Gastrocnemius medialis (tissue), 4 donors: ENCODE measurements at regions of chr7 and their contacts with region 1.

Region 1: DNA sequence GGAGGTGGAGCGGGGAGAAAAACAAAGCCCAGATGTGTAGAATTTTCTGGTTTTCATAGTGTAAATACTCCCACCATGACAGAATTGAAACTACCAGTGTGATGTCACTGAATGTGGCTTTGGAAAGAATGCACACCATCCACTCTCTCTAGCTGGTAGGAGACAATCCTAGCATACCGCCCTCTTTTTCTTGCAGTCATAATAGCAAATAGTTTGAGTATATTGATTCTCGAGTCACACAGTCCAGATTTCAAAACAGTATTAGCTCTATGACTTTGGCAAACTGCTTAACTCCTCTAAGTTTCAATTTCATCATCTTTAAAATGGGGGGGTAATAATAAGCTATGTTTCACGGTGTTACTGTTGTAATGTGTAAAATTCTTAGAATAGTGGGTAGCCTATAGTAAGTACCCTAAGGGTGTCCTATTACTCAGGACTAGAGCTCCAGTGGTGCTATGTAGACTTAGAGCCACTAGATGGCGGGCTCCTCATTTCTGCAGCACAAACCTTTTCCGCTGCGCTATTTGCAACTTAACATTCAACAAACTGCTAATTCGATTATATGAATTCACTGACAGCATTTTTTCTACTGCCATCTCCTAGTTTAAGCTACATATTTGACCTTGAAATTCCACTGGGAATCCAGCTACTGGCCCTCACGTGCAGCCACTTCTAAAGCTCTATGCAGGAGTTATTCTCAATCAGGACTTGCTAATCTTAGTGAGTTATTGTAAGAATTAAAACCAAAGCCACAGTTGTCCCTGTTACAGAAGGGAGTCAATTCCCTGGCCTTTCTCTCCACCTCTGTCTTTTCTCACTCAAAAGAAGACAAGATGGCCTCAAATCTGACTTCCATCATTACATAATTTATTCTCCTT is 18.7 kb downstream of the TAS2R40 start:
- DNase-seq: peak; percentile 43 to 56
- ATAC-seq: peak; percentile 87 to 92
- H3K4me3 ChIP-seq: no peak overlapping the region
- H3K27ac ChIP-seq: no peak overlapping the region
- H3K4me1 ChIP-seq: peaks cover 0 to 4% of the 10 kb centered on the region in 2 donors
- H3K27me3 ChIP-seq: no peaks in the 10 kb centered on the region
- CTCF ChIP-seq: peak; percentile 82 to 96 (median 87)
- POLR2A ChIP-seq: no peak

Region 2: GRCh38 chr7:143199040-143199439 is 41.5 kb before region 1 on chr7:
- in situ Hi-C with region 1: no loop called
- intact Hi-C with region 1: no loop called
- DNase-seq: no peak
- ATAC-seq: no peak
- H3K4me3 ChIP-seq: no peak overlapping the region
- H3K27ac ChIP-seq: no peak overlapping the region
- H3K4me1 ChIP-seq: no peaks in the 10 kb centered on the region
- H3K27me3 ChIP-seq: no peaks in the 10 kb centered on the region
- CTCF ChIP-seq: no peak
- POLR2A ChIP-seq: no peak

Region 3: DNA sequence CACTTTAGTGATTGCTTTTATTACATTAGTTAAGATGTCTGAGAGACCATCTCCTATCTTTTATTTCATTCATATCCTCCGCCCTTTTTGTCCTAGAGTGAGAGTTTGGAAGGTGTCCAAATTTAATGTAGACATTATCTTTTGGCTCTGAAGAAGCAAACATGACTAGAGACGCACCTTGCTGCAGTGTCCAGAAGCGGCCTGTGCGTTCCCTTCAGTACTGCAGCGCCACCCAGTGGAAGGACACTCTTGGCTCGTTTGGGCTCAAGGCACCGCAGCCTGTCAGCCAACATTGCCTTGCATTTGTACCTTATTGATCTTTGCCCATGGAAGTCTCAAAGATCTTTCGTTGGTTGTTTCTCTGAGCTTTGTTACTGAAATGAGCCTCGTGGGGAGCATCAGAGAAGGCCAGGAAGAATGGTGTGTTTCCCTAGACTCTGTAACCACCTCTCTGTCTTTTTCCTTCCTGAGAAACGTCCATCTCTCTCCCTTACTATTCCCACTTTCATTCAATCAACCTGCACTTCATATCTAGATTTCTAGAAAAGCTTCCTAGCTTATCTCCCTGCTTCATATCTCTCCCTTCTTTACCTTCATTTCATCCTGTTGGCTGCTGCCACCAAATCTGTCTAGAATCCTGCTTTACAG is 65.0 kb after region 1 on chr7:
- in situ Hi-C with region 1: no loop called
- intact Hi-C with region 1: loop called (anchors 1 kb)
- DNase-seq: peak in 1 of 2 donors; percentile 55
- ATAC-seq: peak; percentile 26 to 84
- H3K4me3 ChIP-seq: no peak overlapping the region
- H3K27ac ChIP-seq: no peak overlapping the region
- H3K4me1 ChIP-seq: peaks cover 15% of the 10 kb centered on the region in 2 donors
- H3K27me3 ChIP-seq: no peaks in the 10 kb centered on the region
- CTCF ChIP-seq: peak; percentile 54 to 74 (median 62)
- POLR2A ChIP-seq: no peak

Region 4: DNA sequence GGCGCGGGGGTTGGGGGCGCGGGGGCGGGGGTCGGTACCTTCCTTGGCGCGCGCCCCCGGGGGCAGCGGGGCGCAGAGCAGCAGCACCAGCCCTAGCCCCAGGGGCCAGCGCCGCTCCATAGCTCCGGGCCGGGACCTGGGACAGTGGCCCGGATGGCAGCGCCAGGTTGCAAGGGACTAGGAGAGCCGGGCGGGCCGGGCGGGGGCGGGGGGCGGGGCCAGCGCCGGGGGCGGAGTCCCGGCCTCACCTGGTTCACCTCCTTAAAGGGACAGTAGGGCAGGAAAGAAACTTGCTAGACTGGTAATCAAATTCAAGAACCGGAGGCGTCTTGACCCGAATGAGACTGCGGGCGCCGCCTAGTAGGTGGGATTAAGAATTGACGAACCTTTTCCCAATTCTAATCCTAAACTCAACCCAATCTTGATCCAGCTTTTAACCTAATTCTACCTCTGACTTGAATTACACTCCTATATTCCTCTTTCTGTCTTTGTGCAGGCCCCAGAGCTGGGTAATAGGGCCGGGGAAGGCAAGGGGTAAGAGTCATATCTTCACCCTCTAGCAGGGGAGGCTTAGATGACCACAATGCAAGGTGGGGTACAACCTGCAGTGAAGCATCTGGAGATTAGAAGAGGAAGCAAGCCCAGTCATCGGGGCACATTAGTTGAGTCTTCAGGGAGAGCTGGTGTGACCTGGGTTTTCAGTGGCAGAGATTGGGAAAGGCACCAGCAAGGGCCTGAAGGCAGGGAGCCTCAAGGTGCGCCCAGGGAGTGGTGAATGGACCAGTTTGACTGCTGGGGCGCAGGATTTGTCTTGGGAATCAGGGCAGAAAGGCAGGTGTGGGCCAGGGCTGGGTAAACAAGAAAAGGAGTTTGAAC is 168.4 kb after region 1 on chr7 and contains the start of gene EPHA1:
- in situ Hi-C with region 1: loop called in 3 of 4 experiments (anchors 5 to 10 kb)
- intact Hi-C with region 1: no loop called
- DNase-seq: no peak
- ATAC-seq: no peak
- H3K4me3 ChIP-seq: no peak within 1 kb of the TSS
- H3K27ac ChIP-seq: no peak within 1 kb of the TSS
- H3K4me1 ChIP-seq: no peaks in the 10 kb centered on the region
- H3K27me3 ChIP-seq: no peaks in the 10 kb centered on the region
- CTCF ChIP-seq: no peak
- POLR2A ChIP-seq: no peak
- total RNA-seq, gene EPHA1: not detected

Region 5: GRCh38 chr7:143416565-143417149 is 176.1 kb after region 1 on chr7:
- in situ Hi-C with region 1: loop called in 2 of 4 experiments (anchors 5 to 10 kb)
- intact Hi-C with region 1: loop called (anchors 5 kb)
- DNase-seq: no peak
- ATAC-seq: peak; percentile 54 to 70
- H3K4me3 ChIP-seq: no peak overlapping the region
- H3K27ac ChIP-seq: no peak overlapping the region
- H3K4me1 ChIP-seq: no peaks in the 10 kb centered on the region
- H3K27me3 ChIP-seq: no peaks in the 10 kb centered on the region
- CTCF ChIP-seq: peak; percentile 67 to 84 (median 80)
- POLR2A ChIP-seq: no peak